ENCODE measurements at regions of chr13 and their contacts with region 1.

Region 1: DNA sequence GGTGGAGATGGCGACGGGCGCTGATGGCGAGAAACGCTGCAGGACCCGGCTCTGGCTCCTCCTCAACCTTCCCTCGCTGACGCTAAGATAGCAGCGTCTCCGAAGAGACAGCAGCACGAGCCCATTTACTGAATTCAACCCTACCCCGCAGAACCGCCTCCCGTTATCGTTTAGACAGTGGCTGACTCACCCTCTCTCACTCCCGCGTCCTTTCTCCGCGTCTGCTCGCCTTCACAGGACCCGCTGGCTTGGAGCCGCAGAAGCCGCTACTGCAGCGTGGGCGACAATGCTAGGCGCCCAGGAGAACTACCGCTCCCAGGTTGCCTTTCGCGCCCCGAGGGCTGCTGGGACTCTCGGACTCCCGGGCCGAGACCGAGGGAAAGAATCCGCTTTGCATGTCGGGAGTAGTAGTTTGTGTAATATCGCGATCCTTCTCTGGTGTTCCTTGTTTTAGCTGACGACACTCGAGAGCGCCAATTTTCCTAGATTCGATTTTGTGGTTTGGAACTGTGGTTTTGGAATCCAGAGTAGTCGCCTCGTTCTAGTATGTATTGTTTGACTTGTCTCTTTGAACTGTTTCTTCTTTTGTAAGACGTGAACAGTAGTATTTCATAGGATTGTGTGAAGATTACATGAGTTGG is at the start of gene KBTBD6:
- DNase-seq: peak; percentile 95 to 98
- H3K4me3 ChIP-seq: peak within 1 kb of the TSS; percentile 66
- CTCF ChIP-seq: no peak
- POLR2A ChIP-seq: no peak
- total RNA-seq, gene KBTBD6: 3.2 to 6.3 (median 4.9) TPM

Region 2: GRCh38 chr13:40974460-40975407 is 157.9 kb before region 1 on chr13:
- intact Hi-C with region 1: no loop called
- DNase-seq: no peak
- H3K4me3 ChIP-seq: no peak overlapping the region
- CTCF ChIP-seq: no peak
- POLR2A ChIP-seq: no peak

Region 3: GRCh38 chr13:41193919-41194824 is 61.5 kb after region 1 on chr13 and contains the start of gene KBTBD7:
- intact Hi-C with region 1: loop called (anchors 10 kb)
- DNase-seq: peak; percentile 92 to 97
- H3K4me3 ChIP-seq: peak within 1 kb of the TSS; percentile 41
- CTCF ChIP-seq: no peak
- POLR2A ChIP-seq: no peak
- total RNA-seq, gene KBTBD7: 4.1 to 9.1 (median 6.7) TPM

Measured in lower leg skin (tissue), 4 donors.